ENCODE measurements at regions of chr15 and their contacts with region 1.

Region 1: DNA sequence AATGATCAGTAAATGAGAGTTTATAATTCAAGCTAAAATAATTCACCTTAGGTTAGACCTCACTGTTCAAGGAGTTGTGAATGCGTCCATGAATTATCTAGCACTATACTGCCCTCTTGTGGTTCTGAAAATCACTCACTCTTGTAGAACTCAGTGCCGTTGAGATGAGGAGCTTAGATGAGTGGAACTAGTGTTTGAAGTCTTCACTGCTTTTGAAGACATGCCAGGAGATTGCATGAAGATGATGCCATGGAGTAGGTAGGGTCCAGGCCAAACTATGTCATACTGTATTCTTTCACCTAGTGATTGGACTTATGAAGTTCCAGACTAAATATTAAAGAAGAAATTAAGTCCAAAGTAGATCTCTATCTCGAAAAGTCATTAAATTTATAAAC is 28.8 kb downstream of the LYSMD4 start:
- DNase-seq: peak; percentile 92
- H3K4me3 ChIP-seq: no peak overlapping the region
- H3K27ac ChIP-seq: peak overlapping the region; percentile 75
- H3K4me1 ChIP-seq: peaks cover 46% of the 10 kb centered on the region
- H3K27me3 ChIP-seq: no peaks in the 10 kb centered on the region
- CTCF ChIP-seq: peak; percentile 50 to 61
- POLR2A ChIP-seq: no peak

Region 2: DNA sequence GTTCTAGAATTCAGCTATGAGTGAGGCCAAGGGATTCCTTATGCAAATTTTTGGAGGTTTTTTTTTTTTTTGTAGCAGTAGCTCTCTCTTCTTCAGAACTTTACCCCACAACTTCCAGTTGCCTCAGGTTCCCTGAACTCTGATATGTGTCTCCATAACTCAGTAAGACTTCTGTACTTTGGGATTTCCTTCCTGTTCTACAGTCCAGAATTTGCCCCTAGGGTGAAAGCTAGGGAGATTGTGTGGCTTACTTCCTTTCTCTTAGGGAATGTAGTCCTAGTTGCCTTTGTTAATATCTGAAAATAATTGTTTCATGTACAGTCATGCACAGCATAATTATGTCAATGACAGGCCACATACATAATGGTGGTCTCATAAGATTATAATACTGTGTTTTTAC is 422.3 kb before region 1 on chr15:
- CTCF ChIA-PET with region 1: interaction called, 230 read pairs
- POLR2A ChIA-PET with region 1: no interaction called
- dilution Hi-C with region 1: loop called (anchors 25 kb)
- intact Hi-C with region 1: loop called (anchors 1 kb)
- DNase-seq: peak; percentile 12
- H3K4me3 ChIP-seq: no peak overlapping the region
- H3K27ac ChIP-seq: no peak overlapping the region
- H3K4me1 ChIP-seq: peaks cover 15% of the 10 kb centered on the region
- H3K27me3 ChIP-seq: no peaks in the 10 kb centered on the region
- CTCF ChIP-seq: no peak
- POLR2A ChIP-seq: no peak

Region 3: GRCh38 chr15:99385865-99386264 is 318.6 kb before region 1 on chr15:
- CTCF ChIA-PET with region 1: interaction called, 22 read pairs
- POLR2A ChIA-PET with region 1: no interaction called
- dilution Hi-C with region 1: no loop called
- intact Hi-C with region 1: no loop called
- DNase-seq: peak; percentile 53
- H3K4me3 ChIP-seq: no peak overlapping the region
- H3K27ac ChIP-seq: no peak overlapping the region
- H3K4me1 ChIP-seq: no peaks in the 10 kb centered on the region
- H3K27me3 ChIP-seq: no peaks in the 10 kb centered on the region
- CTCF ChIP-seq: no peak
- POLR2A ChIP-seq: no peak

Region 4: DNA sequence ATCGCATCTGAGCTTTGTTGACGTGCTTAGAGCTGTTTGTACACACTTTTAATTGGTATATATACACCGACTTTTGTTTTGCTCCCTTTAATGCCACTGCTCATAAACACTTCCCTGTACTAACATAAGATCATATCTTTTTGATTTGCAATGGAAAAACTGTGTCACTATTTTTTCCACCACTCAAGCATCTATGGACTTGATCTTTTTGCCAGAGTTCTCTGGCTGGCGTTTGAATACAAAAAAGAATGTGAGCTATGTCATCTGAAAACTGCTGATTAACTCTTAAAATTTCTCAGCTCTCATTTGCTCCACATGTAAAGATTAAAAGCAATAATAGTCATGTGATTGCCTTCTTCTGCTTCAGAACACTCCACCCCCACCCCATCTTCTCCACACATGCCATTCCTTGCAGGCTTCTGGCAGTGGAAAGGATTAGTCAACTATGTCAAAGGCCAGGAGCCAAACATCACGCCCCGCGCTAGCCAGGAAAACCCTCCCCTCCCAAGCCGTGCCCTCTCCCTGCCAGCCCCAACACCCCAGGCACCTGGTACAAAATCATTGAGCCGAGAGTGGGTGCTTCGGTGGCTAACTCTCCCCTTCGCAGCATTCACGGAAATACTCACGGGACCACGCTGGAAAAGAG is 262.1 kb before region 1 on chr15:
- CTCF ChIA-PET with region 1: interaction called, 11 read pairs
- POLR2A ChIA-PET with region 1: no interaction called
- dilution Hi-C with region 1: no loop called
- intact Hi-C with region 1: no loop called
- DNase-seq: peak; percentile 94
- H3K4me3 ChIP-seq: no peak overlapping the region
- H3K27ac ChIP-seq: peak overlapping the region; percentile 47
- H3K4me1 ChIP-seq: peaks cover 21% of the 10 kb centered on the region
- H3K27me3 ChIP-seq: no peaks in the 10 kb centered on the region
- CTCF ChIP-seq: no peak
- POLR2A ChIP-seq: no peak

Region 5: GRCh38 chr15:99565299-99566156 is 138.9 kb before region 1 on chr15 and contains the start of gene MEF2A:
- CTCF ChIA-PET with region 1: interaction called, 119 read pairs
- POLR2A ChIA-PET with region 1: interaction called, 5 read pairs
- dilution Hi-C with region 1: no loop called
- intact Hi-C with region 1: loop called (anchors 1 kb)
- DNase-seq: peak; percentile 89
- H3K4me3 ChIP-seq: peak within 1 kb of the TSS; percentile 67 to 90 (median 89)
- H3K27ac ChIP-seq: peak within 1 kb of the TSS; percentile 82
- H3K4me1 ChIP-seq: peaks cover 31% of the 10 kb centered on the region
- H3K27me3 ChIP-seq: no peaks in the 10 kb centered on the region
- CTCF ChIP-seq: no peak
- POLR2A ChIP-seq: peak; percentile 77
- total RNA-seq, gene MEF2A: 45.3 and 50.1 TPM in 2 replicates

Region 6: DNA sequence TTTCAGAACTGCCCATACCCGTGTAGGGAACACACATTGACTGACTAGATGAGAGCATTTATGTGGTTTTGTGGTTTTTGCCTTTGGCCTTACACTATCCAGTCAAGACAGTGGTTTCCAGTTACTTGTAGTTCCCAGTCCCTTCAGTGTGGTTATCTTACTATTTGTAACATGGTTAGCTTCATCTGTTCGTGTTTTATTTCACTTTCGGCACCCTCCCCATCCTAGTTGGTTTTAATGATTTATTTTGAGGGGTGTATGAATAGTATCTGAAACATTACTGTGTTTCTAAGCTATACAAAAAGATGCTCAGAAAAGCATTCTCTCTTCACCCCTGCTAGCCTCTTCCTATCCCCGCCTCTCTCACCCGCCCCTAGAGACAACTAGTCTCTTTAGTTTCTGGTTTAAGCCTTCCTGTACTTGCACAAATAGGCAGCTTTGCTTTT is 14.7 kb after region 1 on chr15:
- CTCF ChIA-PET with region 1: interaction called, 48 read pairs
- POLR2A ChIA-PET with region 1: no interaction called
- dilution Hi-C with region 1: no loop called
- intact Hi-C with region 1: no loop called
- DNase-seq: no peak
- H3K4me3 ChIP-seq: no peak overlapping the region
- H3K27ac ChIP-seq: no peak overlapping the region
- H3K4me1 ChIP-seq: no peaks in the 10 kb centered on the region
- H3K27me3 ChIP-seq: no peaks in the 10 kb centered on the region
- CTCF ChIP-seq: no peak
- POLR2A ChIP-seq: no peak

Region 7: GRCh38 chr15:99928429-99928981 is 224.1 kb after region 1 on chr15:
- CTCF ChIA-PET with region 1: no interaction called
- POLR2A ChIA-PET with region 1: no interaction called
- dilution Hi-C with region 1: no loop called
- intact Hi-C with region 1: no loop called
- DNase-seq: peak; percentile 54
- H3K4me3 ChIP-seq: peak overlapping the region in 2 of 3 experiments; percentile 17 to 61
- H3K27ac ChIP-seq: no peak overlapping the region
- H3K4me1 ChIP-seq: peaks cover 5% of the 10 kb centered on the region
- H3K27me3 ChIP-seq: peaks cover 2 to 4% of the 10 kb centered on the region in 2 experiments
- CTCF ChIP-seq: peak; percentile 31 to 57
- POLR2A ChIP-seq: no peak

Region 8: DNA sequence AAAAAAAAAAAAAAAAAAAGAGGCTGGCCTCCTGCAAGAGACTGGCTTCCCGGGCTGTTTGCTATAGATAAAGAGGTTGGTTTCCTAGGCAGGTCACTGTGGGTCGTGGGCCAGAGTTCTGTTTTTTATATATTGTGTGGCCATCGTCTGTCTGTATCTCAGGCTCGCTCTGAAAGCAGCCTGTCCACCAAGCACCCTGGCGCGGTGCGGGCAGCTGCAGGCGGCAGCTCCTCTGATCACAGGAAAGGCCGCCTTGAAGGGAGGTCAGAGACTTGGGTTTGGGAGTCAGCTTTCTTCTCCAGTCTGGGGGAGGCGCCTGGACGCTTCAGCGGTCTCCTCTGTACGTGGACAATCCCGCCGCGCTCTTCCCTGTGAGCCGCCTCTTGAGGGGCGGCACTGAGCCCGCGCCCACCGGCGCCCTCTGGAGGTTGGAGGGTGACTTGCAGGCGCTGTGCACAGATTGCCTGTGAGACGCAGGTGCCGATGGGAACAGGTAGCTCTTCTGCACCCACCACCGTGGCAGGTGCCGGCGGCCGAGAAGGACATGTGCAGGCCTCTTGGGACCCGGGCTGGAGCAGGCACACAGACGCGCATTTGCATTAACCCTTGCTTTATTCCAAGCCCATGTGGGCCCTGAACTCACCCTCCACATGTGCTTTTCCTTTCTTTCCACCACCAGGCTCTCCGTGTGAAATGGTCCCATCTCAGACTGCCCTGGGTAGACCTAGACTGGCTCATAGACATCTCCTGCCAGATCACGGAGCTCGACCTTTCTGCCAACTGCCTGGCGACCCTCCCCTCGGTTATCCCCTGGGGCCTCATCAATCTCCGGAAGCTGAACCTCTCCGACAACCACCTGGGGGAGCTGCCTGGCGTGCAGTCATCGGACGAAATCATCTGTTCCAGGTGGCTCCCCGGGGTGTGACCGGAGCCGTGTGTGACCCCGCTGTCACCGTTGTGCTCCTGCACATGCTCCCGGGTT is 1304.0 kb after region 1 on chr15:
- CTCF ChIA-PET with region 1: no interaction called
- POLR2A ChIA-PET with region 1: no interaction called
- dilution Hi-C with region 1: no loop called
- intact Hi-C with region 1: no loop called
- DNase-seq: peak; percentile 89
- H3K4me3 ChIP-seq: peak overlapping the region in 2 of 3 experiments; percentile 26 to 33
- H3K27ac ChIP-seq: no peak overlapping the region
- H3K4me1 ChIP-seq: peaks cover 6% of the 10 kb centered on the region
- H3K27me3 ChIP-seq: no peaks in the 10 kb centered on the region
- CTCF ChIP-seq: peak; percentile 98 to 100
- POLR2A ChIP-seq: no peak

Measured in endothelial cell of umbilical vein (primary cell).